ENCODE measurements at regions of chrX and their contacts with region 1.

Region 1: GRCh38 chrX:28586981-28587551 is at the start of gene IL1RAPL1:
- DNase-seq: peak in 30 of 42 donors; percentile 25 to 79 (median 50)

Region 2: DNA sequence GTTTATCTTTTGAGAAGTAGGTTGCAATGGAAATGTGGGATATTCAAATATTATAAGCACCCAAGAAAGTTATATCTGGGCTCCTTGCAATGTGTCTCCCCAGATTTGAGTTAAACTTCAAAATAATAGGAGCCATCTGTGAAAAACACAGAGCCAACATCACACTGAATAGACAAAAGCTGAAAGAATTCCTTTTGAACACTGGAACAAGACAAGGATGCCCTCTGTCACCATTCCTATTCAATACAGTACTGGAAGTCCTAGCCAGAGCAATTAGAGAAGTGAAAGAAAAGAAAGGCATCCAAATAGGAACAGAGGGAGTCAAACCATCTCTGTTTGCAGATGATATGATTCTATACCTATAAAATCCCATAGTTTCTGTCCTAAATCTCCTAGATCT is 114.1 kb before region 1 on chrX:
- intact Hi-C with region 1: no loop called
- DNase-seq: peak in 3 of 42 donors; percentile 1 to 6 (median 2)

Region 3: GRCh38 chrX:28847423-28847822 is 260.4 kb after region 1 on chrX:
- intact Hi-C with region 1: loop called (anchors 5 kb)
- DNase-seq: peak; percentile 62 to 92 (median 83)